ENCODE measurements at regions of chr7 and their contacts with region 1.

Region 1: DNA sequence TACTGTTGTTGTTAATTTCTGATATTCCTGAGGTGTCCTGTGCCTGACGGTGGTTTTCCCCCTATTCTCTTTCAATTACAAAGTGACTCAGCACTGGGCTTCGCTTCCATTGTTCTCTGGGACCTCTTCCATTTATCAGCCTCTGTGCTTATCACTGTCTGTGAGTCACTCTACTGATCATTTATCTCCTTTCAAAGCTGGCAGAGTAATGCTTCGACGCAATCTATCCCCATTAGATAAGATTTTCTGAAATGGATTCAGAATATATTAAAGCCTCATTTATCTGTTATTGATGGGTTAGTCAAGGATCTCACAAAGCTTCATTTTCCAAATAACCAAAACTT is 679.2 kb downstream of the SDK1 start:
- DNase-seq: no peak
- H3K4me3 ChIP-seq: no peak overlapping the region
- H3K27ac ChIP-seq: no peak overlapping the region
- H3K27me3 ChIP-seq: no peaks in the 10 kb centered on the region
- CTCF ChIP-seq: no peak

Region 2: DNA sequence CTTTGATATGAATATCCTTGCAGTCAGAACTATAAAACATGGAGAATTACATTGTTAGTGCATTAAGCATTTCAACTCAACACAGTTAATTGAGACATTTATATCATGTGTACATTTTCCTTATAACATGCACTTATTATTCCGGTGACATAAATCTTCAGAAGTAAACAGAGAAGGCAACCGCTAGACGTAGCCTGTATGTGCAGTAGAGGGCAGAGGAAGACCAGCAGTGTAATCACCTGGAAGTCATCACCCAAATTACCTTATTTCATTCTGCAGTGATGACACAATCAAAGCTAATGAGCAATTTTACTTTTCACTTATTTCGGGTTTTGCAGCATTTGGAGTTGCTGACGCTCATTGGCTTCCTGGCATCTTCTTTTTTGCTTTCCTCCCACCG is 284.7 kb before region 1 on chr7:
- intact Hi-C with region 1: loop called in 1 of 2 experiments (anchors 10 kb)
- DNase-seq: no peak
- H3K4me3 ChIP-seq: no peak overlapping the region
- H3K27ac ChIP-seq: no peak overlapping the region
- H3K27me3 ChIP-seq: no peaks in the 10 kb centered on the region
- CTCF ChIP-seq: peak in 51 of 56 donors; percentile 20 to 86 (median 57)

Region 3: DNA sequence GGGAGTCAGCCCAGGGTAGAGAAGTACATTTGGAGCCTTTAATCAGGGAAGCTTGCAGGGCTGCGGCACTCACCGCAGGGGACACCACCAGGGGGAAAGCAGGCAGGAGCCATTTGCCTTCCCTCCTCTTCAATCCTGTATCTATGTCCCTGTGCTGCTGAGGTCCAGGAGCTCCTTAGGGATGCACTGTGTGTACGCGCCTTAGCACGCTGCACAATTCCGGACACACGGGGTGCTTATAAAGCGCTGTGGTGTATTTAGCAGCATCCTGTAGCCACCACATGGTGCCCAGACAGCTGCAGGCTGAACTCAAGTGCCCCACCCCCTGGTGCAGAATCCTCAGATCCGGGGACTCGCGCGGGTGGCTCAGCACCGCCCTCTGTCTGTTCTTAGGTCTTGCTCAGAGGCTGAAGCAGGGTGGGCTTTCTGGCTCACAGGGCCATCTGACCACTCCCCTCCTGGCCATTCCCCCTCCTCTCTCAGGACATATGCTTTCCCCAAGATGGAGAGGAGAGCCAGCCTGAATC is 257.8 kb before region 1 on chr7:
- intact Hi-C with region 1: no loop called
- DNase-seq: peak in 5 of 10 donors; percentile 27 to 56 (median 46)
- H3K4me3 ChIP-seq: peak overlapping the region in 17 of 59 donors; percentile 1 to 37 (median 21)
- H3K27ac ChIP-seq: no peak overlapping the region
- H3K27me3 ChIP-seq: no peaks in the 10 kb centered on the region
- CTCF ChIP-seq: peak in 53 of 56 donors; percentile 19 to 72 (median 48)

Measured in dorsolateral prefrontal cortex (tissue), 120 donors.